ENCODE measurements at regions of chr17 and their contacts with region 1.

Region 1: DNA sequence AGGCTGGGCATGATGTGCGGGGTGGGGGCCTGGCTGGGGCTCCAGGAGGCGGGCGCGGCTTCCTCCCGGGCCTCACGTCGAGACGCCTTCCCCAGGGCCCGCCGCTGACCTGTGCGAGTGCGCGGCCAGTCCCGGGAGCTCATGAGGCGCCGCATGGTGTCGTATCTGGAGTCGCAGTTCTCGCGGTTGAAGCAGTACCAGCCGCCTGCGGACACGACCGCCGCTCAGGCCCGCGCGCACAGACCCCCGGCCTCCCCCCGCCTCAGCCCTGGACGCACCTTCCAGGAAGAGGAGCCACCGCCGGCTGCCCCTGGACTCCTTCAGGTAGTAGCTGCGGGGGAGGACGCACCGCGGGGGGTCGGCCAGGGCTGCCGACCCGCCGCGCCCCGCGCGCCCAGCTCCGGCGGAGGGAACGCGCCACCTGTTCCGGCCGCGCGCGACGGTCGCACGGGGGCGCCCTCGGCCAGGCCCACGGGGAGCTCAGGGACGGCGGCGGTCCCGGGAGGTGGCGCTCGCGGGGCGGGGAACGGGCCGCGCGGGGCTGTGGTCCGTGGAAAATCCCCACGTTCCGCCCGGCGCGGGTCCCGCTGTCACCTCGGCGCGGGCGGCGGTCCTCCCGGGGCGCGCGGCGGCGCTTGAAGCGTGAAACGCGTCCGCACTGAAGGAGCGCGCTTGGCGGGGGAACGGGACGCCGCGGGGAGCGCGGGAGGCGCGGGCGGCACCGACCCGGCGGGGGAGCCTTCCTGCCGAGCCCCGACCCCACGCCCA is 1.4 kb downstream of the NOTUM start:
- DNase-seq: peak; percentile 96
- H3K4me3 ChIP-seq: peak overlapping the region; percentile 40 to 49
- H3K27ac ChIP-seq: no peak overlapping the region
- H3K4me1 ChIP-seq: peaks cover 0 to 25% of the 10 kb centered on the region in 2 experiments; a peak in 1 of 4 replicates
- H3K27me3 ChIP-seq: peaks cover 18% of the 10 kb centered on the region
- CTCF ChIP-seq: peak; percentile 62
- EP300 ChIP-seq: peak in 1 of 2 experiments; percentile 17; a peak in 1 of 4 replicates
- RAD21 ChIP-seq: peak; percentile 92

Region 2: DNA sequence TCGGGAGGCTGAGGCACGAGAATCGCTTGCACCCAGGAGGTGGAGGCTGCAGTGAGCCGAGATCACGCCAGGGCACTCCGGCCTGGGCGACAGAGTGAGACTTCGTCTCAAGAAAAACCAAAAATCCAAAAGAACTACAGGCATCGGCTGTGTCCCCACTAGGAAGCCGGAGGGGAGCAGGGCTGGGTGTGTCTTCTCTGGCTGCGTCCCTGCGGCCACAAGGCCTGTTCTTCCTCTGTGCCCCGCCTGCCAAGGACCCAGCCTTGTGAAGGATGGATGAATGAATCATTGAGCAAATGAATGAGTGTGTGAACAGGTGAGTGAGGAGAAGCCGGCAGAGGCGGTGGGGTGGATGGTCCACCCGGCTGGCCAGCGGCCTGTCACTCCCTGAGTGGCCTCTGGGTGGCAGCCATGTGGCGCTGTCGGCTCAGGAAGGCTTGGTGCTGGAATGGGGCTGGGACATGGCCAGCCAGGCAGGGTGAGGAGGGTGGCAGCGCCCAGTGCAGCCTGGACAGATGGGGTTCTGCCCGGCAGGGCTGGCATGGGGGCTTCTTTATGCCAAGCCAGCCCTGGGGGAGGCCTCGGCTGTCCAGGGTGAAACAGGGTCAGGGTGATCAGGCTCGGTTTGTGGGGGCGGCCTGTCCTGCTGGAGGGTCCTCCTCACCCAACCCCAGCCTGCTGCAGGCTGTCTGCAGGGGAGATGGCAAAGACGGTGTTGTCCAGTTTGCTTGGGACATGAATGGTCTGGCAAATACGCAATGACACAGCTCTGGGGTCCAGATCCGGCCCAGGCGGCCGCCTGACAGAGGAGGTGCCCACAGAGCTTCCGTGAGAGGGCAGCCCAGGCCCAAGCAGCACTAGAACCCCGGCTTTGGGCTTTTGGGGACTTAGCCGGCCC is 225.8 kb before region 1 on chr17:
- CTCF ChIA-PET with region 1: interaction called, 10 read pairs
- POLR2A ChIA-PET with region 1: no interaction called
- DNase-seq: peak; percentile 100
- H3K4me3 ChIP-seq: no peak overlapping the region; a peak in 1 of 4 replicates
- H3K27ac ChIP-seq: no peak overlapping the region
- H3K4me1 ChIP-seq: peaks cover 0 to 5% of the 10 kb centered on the region in 2 experiments; a peak in 1 of 4 replicates
- H3K27me3 ChIP-seq: no peaks in the 10 kb centered on the region; the same call in 1 of the 2 replicates
- CTCF ChIP-seq: peak; percentile 96
- EP300 ChIP-seq: no peak
- RAD21 ChIP-seq: peak; percentile 100

Region 3: DNA sequence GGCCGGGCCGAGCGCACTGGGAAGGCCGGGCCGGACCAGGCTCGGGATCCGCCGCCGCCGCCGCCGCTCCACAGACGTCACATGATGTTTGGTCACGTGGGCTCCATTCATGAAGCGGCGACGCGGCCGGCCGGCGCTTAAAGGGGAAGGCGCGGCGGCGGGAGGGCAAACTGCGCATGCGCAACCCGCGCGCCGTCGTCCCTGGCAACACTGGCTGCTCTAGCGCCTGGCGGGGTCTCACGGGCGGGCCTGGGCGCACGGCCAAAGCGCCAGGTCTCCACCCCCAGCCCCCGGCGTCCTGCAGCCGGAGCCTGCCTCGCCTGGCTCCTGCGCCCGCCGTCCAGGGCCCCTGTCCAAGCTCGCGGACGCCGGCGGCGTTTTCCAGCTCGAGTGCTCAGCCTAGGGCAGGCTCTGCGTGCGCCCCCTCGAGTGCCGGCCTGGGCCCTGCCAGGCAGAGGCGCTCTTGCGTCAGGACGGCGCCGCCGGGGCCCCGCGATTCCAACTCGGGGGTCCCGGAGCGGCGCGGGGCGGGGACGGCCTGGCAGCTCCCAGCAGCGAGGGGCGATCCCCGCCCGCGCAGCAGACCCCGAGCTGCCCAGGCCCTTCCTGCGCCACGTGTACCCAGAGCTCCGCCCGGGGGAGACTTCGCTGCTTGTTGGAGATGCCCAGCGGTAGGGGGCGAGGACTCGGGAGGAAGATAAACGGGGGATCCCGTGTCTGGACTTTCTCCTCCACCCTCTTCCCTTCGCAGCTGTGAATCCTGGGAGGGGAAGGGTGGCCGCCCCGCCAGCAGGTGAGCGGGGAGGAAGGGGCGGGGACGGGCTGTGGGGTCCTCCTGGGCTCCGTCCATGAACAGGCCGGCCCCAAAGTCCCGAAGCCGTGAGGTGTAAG is 31.6 kb before region 1 on chr17 and contains the start of gene MAFG:
- CTCF ChIA-PET with region 1: interaction called, 107 read pairs
- POLR2A ChIA-PET with region 1: interaction called, 4 read pairs
- DNase-seq: peak; percentile 100
- H3K4me3 ChIP-seq: peak within 1 kb of the TSS; percentile 92
- H3K27ac ChIP-seq: peak within 1 kb of the TSS; percentile 72 to 85
- H3K4me1 ChIP-seq: peaks cover 20 to 31% of the 10 kb centered on the region in 2 experiments; a peak in 2 of 4 replicates
- H3K27me3 ChIP-seq: no peaks in the 10 kb centered on the region
- CTCF ChIP-seq: peak; percentile 63
- EP300 ChIP-seq: peak in 1 of 2 experiments; percentile 44; a peak in 1 of 4 replicates
- RAD21 ChIP-seq: 0 out of 2 replicates have a peak, but pooled peaks have one; percentile 26
- polyA plus RNA-seq, gene MAFG: 30.3 and 38.7 TPM in 2 replicates

Region 4: DNA sequence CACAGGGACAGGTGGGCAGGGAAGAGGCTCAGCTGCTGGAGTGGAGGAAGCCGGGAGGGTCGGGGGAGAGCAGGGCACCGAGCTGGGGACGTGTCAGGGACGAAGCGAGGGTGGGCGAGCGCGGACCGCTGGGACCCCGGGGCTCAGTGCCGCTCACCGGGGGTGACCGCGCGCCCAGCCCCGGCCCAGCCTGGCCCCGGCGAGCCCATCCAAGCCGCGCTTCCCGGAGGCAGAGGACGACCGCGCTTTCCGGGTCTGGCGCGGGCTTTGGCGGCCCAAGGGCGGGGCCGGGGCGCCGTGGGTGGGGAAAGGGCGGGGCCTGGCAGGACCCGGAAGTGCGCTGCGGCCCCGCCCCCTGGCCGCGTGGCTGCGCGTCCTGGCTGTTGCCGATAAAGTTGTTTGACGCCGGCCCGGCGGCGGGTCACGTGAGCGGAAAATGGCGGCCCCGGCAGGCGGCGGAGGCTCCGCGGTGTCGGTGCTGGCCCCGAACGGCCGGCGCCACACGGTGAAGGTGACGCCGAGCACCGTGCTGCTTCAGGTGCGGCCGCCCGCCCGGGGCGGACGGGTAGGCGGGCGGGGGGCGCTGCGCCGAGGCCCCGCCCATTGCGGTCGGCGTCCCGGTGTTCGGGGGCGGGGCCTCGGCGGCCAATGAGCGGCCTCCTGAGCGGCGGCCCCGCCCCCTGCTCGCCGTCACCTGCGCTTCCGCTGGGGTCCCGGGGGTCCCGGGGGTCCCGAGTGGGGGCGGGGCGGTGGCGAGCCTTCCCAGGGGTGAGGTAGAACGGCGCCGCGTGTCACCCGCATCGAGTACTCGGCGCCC is 17.9 kb after region 1 on chr17 and contains the start of gene ASPSCR1:
- CTCF ChIA-PET with region 1: interaction called, 65 read pairs
- POLR2A ChIA-PET with region 1: interaction called, 4 read pairs
- DNase-seq: peak; percentile 99
- H3K4me3 ChIP-seq: peak within 1 kb of the TSS; percentile 69 to 95
- H3K27ac ChIP-seq: peak within 1 kb of the TSS; percentile 65 to 83
- H3K4me1 ChIP-seq: peaks cover 10 to 18% of the 10 kb centered on the region in 2 experiments; a peak in 2 of 4 replicates
- H3K27me3 ChIP-seq: no peaks in the 10 kb centered on the region
- CTCF ChIP-seq: no peak
- EP300 ChIP-seq: peak in 1 of 2 experiments; percentile 48; a peak in 2 of 4 replicates
- RAD21 ChIP-seq: no peak
- polyA plus RNA-seq, gene ASPSCR1: 27.5 and 36.2 TPM in 2 replicates

Region 5: DNA sequence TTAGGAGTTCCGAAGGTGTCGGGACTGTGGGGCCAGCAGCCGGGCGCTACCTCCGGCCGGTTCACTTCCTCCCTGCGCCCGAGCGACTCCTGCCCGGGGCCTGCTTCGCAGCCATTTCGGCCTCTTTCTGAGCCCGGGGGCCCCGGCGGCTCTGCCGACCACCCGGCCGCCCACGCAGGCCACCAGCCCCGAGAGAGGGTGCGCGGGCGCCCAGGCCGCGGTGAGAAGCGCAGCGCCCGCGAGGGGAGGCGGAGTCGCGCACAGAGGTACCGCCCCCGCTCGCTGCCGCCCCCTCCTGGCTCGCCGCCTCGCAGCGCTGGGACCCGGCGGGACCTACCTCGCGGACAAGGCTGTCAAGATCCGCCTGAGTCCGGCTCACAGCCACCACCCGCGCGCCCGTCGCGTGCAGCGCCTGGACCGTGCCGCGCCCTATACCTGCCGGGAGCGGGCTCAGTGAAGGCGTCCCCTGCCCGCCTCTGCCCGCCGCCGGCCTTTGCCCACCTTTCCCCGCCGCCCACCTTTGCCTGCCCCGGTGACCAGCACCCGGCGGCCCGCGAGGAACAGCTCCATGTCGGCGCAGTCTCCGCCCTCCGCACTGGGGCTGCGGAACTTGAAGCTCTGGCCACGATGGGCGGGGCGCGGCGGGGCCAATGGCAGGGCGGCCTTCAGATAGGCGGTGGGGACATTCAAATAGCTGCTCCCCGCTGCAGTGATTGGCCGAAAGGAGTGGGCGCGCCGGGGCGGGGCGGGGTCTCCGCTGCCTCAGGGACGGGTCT is 77.8 kb after region 1 on chr17 and contains the start of gene DCXR:
- CTCF ChIA-PET with region 1: interaction called, 1,216 read pairs
- POLR2A ChIA-PET with region 1: interaction called, 6 read pairs
- DNase-seq: peak; percentile 100
- H3K4me3 ChIP-seq: peak within 1 kb of the TSS; percentile 72 to 87
- H3K27ac ChIP-seq: peak within 1 kb of the TSS; percentile 74 to 92
- H3K4me1 ChIP-seq: peaks cover 7 to 27% of the 10 kb centered on the region in 2 experiments
- H3K27me3 ChIP-seq: no peaks in the 10 kb centered on the region
- CTCF ChIP-seq: peak; percentile 84
- EP300 ChIP-seq: no peak
- RAD21 ChIP-seq: peak; percentile 44
- polyA plus RNA-seq, gene DCXR: 153 and 190 TPM in 2 replicates

Region 6: GRCh38 chr17:82105882-82106687 is 146.5 kb after region 1 on chr17:
- CTCF ChIA-PET with region 1: interaction called, 13 read pairs
- POLR2A ChIA-PET with region 1: no interaction called
- DNase-seq: peak; percentile 97
- H3K4me3 ChIP-seq: peak overlapping the region in 1 of 2 experiments; percentile 9; a peak in 1 of 4 replicates
- H3K27ac ChIP-seq: peak overlapping the region; percentile 16 to 93; a peak in 3 of 4 replicates
- H3K4me1 ChIP-seq: peaks cover 11 to 63% of the 10 kb centered on the region in 2 experiments; a peak in 3 of 4 replicates
- H3K27me3 ChIP-seq: no peaks in the 10 kb centered on the region
- CTCF ChIP-seq: peak; percentile 49
- EP300 ChIP-seq: peak in 1 of 2 experiments; percentile 42; a peak in 1 of 4 replicates
- RAD21 ChIP-seq: peak; percentile 38

Measured in SK-N-SH (cell line).